GM10248 (cell line): ENCODE measurements at regions of chr14 and their contacts with region 1.

Region 1: DNA sequence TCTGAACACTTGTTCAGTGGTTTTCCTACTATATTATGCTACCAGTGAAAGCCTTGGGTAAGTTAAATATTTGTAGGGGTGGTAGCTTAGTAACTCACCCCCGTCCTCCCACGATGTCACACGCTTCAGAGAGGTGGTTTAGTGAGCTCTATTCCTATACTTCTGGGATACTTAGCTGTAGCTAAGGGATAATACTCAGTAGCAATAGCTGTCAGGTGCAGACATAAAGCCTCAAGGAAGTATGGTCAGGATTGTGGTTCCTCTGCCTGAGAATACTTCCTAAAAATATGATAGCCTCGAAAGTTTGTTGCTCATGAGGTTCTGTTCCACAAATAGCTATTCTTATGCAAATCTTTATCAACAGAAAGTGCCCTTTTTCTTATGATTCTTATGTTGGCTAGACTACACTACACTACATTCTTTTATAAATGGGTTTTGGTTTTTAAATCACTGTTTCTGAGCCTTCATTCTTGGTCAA is 11.9 kb downstream of the DLST start:
- DNase-seq: no peak
- CTCF ChIP-seq: no peak

Region 2: GRCh38 chr14:74881431-74882361 is 12.0 kb before region 1 on chr14 and contains the start of gene DLST:
- CTCF ChIA-PET with region 1: interaction called, 12 read pairs
- POLR2A ChIA-PET with region 1: interaction called, 4 read pairs
- DNase-seq: peak; percentile 97
- CTCF ChIP-seq: no peak

Region 3: GRCh38 chr14:75050852-75051554 is 157.3 kb after region 1 on chr14 and contains the start of gene MLH3:
- CTCF ChIA-PET with region 1: no interaction called
- POLR2A ChIA-PET with region 1: no interaction called
- DNase-seq: peak; percentile 91
- CTCF ChIP-seq: no peak